ENCODE measurements at regions of chr3 and their contacts with region 1.

Region 1: GRCh38 chr3:146326670-146327543 is 76.0 kb upstream of the PLSCR4 start:
- DNase-seq: no peak
- H3K4me3 Mint-ChIP-seq: no peak overlapping the region
- H3K27ac Mint-ChIP-seq: no peak overlapping the region
- H3K4me1 Mint-ChIP-seq: no peaks in the 10 kb centered on the region
- H3K27me3 Mint-ChIP-seq: peaks cover 6% of the 10 kb centered on the region

Region 2: DNA sequence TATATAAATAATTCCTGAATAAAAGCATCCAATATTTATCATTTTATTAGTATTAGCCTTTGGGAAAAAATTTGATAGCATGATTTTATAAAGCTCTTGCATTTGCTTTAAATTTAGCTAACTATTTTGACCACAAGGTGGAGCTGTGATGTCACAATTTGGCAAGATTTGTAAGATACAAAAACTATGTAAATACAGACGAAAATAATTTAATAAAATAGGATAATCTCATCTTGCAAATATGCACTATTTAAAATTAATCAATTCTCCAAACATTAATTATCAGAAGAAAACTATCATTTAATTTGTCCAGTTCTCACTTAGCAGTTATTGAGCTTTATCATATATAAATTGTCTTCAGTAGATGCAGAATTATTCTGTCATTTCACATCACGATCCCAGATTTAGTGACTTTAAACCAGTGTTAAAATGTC is 261.3 kb before region 1 on chr3:
- CTCF ChIA-PET with region 1: interaction called, 4 read pairs
- intact Hi-C with region 1: loop called (anchors 1 kb)
- DNase-seq: peak; percentile 26
- H3K4me3 Mint-ChIP-seq: no peak overlapping the region
- H3K27ac Mint-ChIP-seq: no peak overlapping the region
- H3K4me1 Mint-ChIP-seq: no peaks in the 10 kb centered on the region
- H3K27me3 Mint-ChIP-seq: no peaks in the 10 kb centered on the region

Region 3: DNA sequence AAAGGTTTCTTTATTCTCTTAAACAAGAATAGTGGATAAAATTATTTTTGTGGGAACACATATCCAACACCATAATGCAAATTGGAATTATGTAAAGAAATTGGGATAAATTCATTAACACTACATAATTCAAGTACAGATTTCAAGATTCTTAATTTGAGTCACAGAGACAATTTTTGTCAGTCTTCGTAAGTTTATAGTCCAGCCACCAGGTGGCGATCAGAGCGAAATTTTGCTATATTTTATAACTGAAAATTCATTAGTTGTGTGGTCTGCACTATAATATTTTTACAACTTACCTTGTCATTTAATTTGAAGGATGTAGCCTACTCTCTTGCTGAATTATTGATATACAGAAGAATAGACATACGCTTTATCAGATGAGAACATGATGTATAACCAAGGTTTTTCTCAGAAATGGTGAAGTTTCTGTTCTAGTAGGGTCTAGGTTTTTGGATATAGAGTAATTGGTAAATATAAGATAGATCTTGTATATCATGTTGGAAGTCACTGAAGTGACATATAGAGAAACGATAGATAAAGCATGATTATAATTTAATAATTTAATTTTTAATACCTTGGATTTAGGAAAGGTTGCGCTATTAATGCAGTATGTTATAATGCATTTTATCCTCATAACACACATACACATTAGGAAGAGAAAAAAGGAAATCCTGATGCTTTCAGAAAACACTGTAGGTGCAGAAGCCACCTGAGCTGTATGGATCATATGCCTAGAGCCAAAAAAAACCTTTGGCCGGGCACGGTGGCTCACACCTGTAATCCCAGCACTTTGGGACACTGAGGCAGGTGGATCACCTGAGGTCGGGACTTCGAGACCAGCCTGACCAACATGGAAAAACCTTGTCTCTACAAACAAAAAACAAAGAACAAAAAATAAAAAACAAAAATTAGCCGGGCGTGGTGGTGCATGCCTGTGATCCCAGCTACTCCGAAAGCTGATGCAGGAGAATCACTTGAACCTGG is 107.7 kb before region 1 on chr3:
- CTCF ChIA-PET with region 1: interaction called, 3 read pairs
- intact Hi-C with region 1: loop called (anchors 1 kb)
- DNase-seq: peak; percentile 60
- H3K4me3 Mint-ChIP-seq: no peak overlapping the region
- H3K27ac Mint-ChIP-seq: no peak overlapping the region
- H3K4me1 Mint-ChIP-seq: no peaks in the 10 kb centered on the region
- H3K27me3 Mint-ChIP-seq: peaks cover 4% of the 10 kb centered on the region

Measured in activated naive CD4-positive, alpha-beta T cell treated with anti-CD3 and anti-CD28 coated beads for 36 hours (primary cell).